ENCODE measurements at regions of chr14 and their contacts with region 1.

Region 1: GRCh38 chr14:70600382-70601157 is at the start of gene MED6:
- DNase-seq: peak; percentile 91 to 97 (median 94)
- H3K4me3 ChIP-seq: peak within 1 kb of the TSS; percentile 64 to 98 (median 82)
- H3K27ac ChIP-seq: peak within 1 kb of the TSS in 4 of 5 donors; percentile 48 to 73 (median 71)
- H3K4me1 ChIP-seq: peaks cover 12 to 20% of the 10 kb centered on the region in 2 donors
- H3K27me3 ChIP-seq: no peaks in the 10 kb centered on the region
- CTCF ChIP-seq: no peak
- POLR2A ChIP-seq: peak in 1 of 2 donors; percentile 54
- total RNA-seq, gene MED6: 6.9 to 49.5 (median 32.6) TPM

Region 2: GRCh38 chr14:69827560-69827959 is 773.0 kb before region 1 on chr14:
- intact Hi-C with region 1: loop called in 1 of 2 experiments (anchors 10 kb)
- DNase-seq: no peak
- H3K4me3 ChIP-seq: no peak overlapping the region
- H3K27ac ChIP-seq: no peak overlapping the region
- H3K4me1 ChIP-seq: no peaks in the 10 kb centered on the region
- H3K27me3 ChIP-seq: no peaks in the 10 kb centered on the region
- CTCF ChIP-seq: no peak
- POLR2A ChIP-seq: no peak

Region 3: DNA sequence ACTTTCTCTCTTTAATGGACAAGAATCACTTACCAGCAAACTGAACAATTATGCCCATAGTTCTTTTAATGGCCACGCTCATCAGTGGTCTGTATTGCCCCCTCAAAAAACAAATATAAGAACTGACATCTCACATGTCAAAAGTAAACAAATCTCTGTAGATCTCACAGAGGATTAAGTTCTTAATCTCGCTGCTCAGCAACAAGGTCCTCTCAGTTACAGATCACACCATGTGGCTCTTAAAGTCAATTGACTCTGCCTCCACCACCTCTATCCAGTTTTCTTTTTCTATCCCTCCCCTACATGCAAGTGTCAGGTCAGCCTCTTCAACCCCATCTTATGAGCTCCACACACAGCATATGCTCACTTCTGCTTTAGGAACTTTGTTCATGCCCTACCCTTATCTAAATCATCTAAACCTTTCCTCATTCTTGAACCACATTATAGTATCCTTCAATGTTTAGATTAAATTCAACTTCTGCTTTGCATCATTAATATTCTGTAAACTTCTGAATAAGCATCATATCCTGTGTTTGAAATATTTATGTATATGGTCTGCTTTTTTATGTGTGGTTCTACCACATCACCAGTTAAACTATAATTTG is 73.0 kb before region 1 on chr14:
- intact Hi-C with region 1: no loop called
- DNase-seq: no peak
- H3K4me3 ChIP-seq: no peak overlapping the region
- H3K27ac ChIP-seq: no peak overlapping the region
- H3K4me1 ChIP-seq: no peaks in the 10 kb centered on the region
- H3K27me3 ChIP-seq: no peaks in the 10 kb centered on the region
- CTCF ChIP-seq: no peak
- POLR2A ChIP-seq: no peak

Region 4: DNA sequence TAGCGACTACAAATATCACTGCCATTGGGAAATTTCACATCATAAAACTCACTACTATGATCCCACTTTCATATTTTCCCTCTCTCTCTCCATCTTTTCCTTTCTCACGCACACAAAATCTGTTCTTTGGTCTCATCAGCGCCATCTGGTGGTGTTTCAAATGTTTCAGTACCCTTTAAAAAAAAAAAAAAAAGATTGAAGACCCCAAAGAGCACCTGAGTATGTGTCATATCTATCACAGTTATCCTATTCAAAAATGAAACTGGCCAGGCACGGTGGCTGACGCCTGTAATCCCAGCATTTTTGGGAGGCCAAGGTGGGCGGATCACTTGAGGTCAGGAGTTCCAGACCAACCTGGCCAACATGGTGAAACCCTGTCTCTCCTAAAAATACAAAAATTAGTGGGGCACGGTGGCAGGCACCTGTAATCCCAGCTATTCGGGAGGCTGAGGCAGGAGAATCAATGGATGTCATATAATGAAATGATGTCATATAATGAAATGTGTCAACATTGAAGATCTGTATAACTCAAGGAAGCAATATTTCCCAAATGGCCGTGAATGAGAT is 113.6 kb after region 1 on chr14:
- intact Hi-C with region 1: loop called in 1 of 2 experiments (anchors 10 kb)
- DNase-seq: peak; percentile 19 to 69 (median 46)
- H3K4me3 ChIP-seq: no peak overlapping the region
- H3K27ac ChIP-seq: no peak overlapping the region
- H3K4me1 ChIP-seq: peaks cover 0 to 6% of the 10 kb centered on the region in 2 donors
- H3K27me3 ChIP-seq: no peaks in the 10 kb centered on the region
- CTCF ChIP-seq: peak; percentile 60 to 81 (median 69)
- POLR2A ChIP-seq: no peak

Region 5: GRCh38 chr14:70809543-70810244 is 209.1 kb after region 1 on chr14:
- intact Hi-C with region 1: loop called in 1 of 2 experiments (anchors 10 kb)
- DNase-seq: peak; percentile 97 to 98 (median 97)
- H3K4me3 ChIP-seq: peak overlapping the region in 3 of 4 donors; percentile 0 to 89 (median 11)
- H3K27ac ChIP-seq: peak overlapping the region in 3 of 5 donors; percentile 44 to 90 (median 72)
- H3K4me1 ChIP-seq: peaks cover 0 to 4% of the 10 kb centered on the region in 2 donors
- H3K27me3 ChIP-seq: no peaks in the 10 kb centered on the region
- CTCF ChIP-seq: no peak
- POLR2A ChIP-seq: peak; percentile 29 to 35

Measured in adrenal gland (tissue), 19 donors.